CD4-positive, alpha-beta memory T cell (primary cell): ENCODE measurements at regions of chr2 and their contacts with region 1.

Region 1: DNA sequence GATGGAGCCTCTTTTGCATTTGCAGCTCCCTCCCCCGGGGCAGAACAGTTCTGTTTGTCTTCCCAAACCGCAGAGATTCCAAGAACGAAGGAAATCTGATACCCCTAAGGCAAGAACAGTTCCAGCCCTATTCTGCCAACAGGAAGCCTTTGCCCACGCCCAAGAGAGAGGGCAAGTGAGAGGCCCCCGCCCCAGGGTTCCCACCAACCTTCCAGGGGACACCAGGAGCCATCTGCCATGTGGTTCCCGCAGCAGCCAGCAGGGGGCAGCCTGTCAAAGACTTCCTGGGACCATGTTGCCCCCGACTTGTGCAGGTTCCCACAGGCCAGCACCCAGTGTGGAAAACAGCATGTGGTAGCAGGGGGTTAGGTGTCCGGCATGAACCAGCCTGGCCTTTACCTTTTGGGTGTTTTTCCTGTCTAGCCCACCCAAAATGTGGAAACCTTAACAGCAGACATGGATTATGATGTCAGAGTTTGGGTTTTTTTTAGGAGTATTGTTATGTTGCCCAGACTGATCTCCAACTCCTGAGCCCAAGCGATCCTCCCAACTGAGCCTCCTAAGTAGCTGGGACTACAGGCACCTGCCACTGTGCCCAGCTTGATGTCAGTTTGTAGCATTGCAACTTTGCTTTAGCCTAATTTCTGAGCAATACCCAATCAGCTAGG is 21.7 kb upstream of the EFHD1 start:
- DNase-seq: peak; percentile 42 to 58 (median 47)
- H3K4me3 ChIP-seq: no peak overlapping the region
- H3K4me3 Mint-ChIP-seq: no peak overlapping the region
- H3K27ac ChIP-seq: no peak overlapping the region
- H3K27ac Mint-ChIP-seq: no peak overlapping the region
- H3K4me1 ChIP-seq: no peaks in the 10 kb centered on the region
- H3K4me1 Mint-ChIP-seq: peaks cover 0 to 2% (median 0%) of the 10 kb centered on the region in 4 donors
- H3K27me3 ChIP-seq: no peaks in the 10 kb centered on the region
- H3K27me3 Mint-ChIP-seq: peaks cover 0 to 3% of the 10 kb centered on the region in 2 donors

Region 2: GRCh38 chr2:232600053-232600773 is 11.5 kb before region 1 on chr2:
- CTCF ChIA-PET with region 1: interaction called, 10 read pairs
- POLR2A ChIA-PET with region 1: interaction called, 3 read pairs
- intact Hi-C with region 1: no loop called
- DNase-seq: no peak
- H3K4me3 ChIP-seq: no peak overlapping the region
- H3K4me3 Mint-ChIP-seq: no peak overlapping the region
- H3K27ac ChIP-seq: no peak overlapping the region
- H3K27ac Mint-ChIP-seq: no peak overlapping the region
- H3K4me1 ChIP-seq: no peaks in the 10 kb centered on the region
- H3K4me1 Mint-ChIP-seq: no peaks in the 10 kb centered on the region
- H3K27me3 ChIP-seq: no peaks in the 10 kb centered on the region
- H3K27me3 Mint-ChIP-seq: peaks cover 0 to 3% of the 10 kb centered on the region in 2 donors

Region 3: GRCh38 chr2:232697100-232697865 is 85.6 kb after region 1 on chr2 and contains the start of gene GIGYF2:
- CTCF ChIA-PET with region 1: no interaction called
- POLR2A ChIA-PET with region 1: no interaction called
- intact Hi-C with region 1: loop called (anchors 5 kb)
- DNase-seq: peak; percentile 86 to 91 (median 87)
- H3K4me3 ChIP-seq: peak within 1 kb of the TSS; percentile 55 to 88
- H3K4me3 Mint-ChIP-seq: peak within 1 kb of the TSS; percentile 91 to 96 (median 93)
- H3K27ac ChIP-seq: peak within 1 kb of the TSS; percentile 86
- H3K27ac Mint-ChIP-seq: peak within 1 kb of the TSS; percentile 90 to 95 (median 93)
- H3K4me1 ChIP-seq: peaks cover 40% of the 10 kb centered on the region
- H3K4me1 Mint-ChIP-seq: peaks cover 31 to 52% (median 36%) of the 10 kb centered on the region in 4 donors
- H3K27me3 ChIP-seq: no peaks in the 10 kb centered on the region
- H3K27me3 Mint-ChIP-seq: no peaks in the 10 kb centered on the region
- total RNA-seq, gene GIGYF2: 82.1 to 89.6 TPM

Region 4: DNA sequence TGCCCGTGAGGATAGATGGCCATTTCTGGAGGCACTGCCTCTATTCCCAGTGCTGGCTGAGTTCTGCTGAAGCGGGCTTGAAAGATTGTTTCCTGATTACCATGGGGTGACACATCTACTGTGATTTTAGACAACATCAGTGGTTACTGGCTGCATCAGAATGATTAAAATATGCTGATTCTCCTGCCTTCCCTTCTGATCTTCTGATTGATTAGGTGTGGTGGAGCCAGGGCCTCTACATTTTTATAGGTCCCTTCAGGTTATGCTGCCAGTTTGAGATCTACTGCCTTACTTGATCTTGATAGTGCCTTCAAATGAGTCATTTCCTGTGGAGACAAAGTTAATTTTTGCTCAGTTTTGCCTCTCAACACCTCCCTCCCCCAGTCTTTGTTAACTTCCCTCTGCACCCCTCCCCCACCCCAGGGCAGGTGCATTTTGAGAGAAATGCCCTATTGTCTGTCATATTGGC is 226.8 kb after region 1 on chr2:
- CTCF ChIA-PET with region 1: no interaction called
- POLR2A ChIA-PET with region 1: no interaction called
- intact Hi-C with region 1: loop called (anchors 5 kb)
- DNase-seq: peak; percentile 38 to 85 (median 49)
- H3K4me3 ChIP-seq: no peak overlapping the region
- H3K4me3 Mint-ChIP-seq: peak overlapping the region in 7 of 8 donors; percentile 23 to 69 (median 59)
- H3K27ac ChIP-seq: peak overlapping the region; percentile 23
- H3K27ac Mint-ChIP-seq: peak overlapping the region; percentile 78 to 91 (median 87)
- H3K4me1 ChIP-seq: peaks cover 34% of the 10 kb centered on the region
- H3K4me1 Mint-ChIP-seq: peaks cover 28 to 39% (median 32%) of the 10 kb centered on the region in 4 donors
- H3K27me3 ChIP-seq: no peaks in the 10 kb centered on the region
- H3K27me3 Mint-ChIP-seq: no peaks in the 10 kb centered on the region

Region 5: GRCh38 chr2:233711312-233712008 is 1099.8 kb after region 1 on chr2:
- CTCF ChIA-PET with region 1: no interaction called
- POLR2A ChIA-PET with region 1: no interaction called
- intact Hi-C with region 1: loop called (anchors 5 kb)
- DNase-seq: peak; percentile 32 to 58 (median 44)
- H3K4me3 ChIP-seq: no peak overlapping the region
- H3K4me3 Mint-ChIP-seq: no peak overlapping the region
- H3K27ac ChIP-seq: no peak overlapping the region
- H3K27ac Mint-ChIP-seq: no peak overlapping the region
- H3K4me1 ChIP-seq: no peaks in the 10 kb centered on the region
- H3K4me1 Mint-ChIP-seq: no peaks in the 10 kb centered on the region
- H3K27me3 ChIP-seq: no peaks in the 10 kb centered on the region
- H3K27me3 Mint-ChIP-seq: peaks cover 33% of the 10 kb centered on the region in 2 donors